Naive thymus-derived CD4-positive, alpha-beta T cell (primary cell): ENCODE measurements at regions of chr9 and their contacts with region 1.

Region 1: DNA sequence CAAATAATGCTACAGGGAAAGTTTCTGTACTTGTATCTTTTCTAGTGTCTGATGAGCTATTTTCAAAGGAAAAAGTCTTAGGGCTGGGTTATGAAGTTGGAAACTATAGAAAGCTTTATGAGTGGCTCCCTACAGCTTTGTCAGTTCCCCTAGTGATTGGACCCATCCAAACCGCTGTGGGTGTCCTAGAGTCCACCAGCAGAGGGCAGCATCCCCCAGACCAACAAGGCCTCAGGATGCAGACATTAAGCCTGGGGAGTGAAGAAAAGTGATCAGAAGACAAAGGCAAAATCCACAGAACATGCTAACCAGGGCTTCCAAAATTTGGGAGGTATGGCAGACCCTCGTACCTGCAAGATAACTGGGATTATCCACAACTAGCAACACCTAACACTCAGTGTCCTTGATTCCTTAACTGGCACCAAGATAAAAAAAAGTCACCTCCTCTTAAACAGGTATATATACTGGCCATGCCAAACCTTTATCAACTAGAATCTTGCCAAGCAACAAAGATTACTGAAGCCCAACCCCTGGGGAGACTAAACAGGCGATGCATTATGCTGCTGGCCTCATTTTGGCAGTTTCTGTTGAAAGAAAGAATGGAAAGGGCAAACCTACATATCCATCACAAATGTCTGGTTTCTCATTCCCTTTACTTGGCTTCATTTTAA is 110.4 kb upstream of the NR5A1 start:
- DNase-seq: peak; percentile 36 to 76 (median 66)
- ATAC-seq: peak; percentile 90
- H3K4me3 ChIP-seq: no peak overlapping the region
- H3K4me3 Mint-ChIP-seq: no peak overlapping the region
- H3K27ac ChIP-seq: no peak overlapping the region
- H3K27ac Mint-ChIP-seq: no peak overlapping the region
- H3K4me1 ChIP-seq: no peaks in the 10 kb centered on the region
- H3K4me1 Mint-ChIP-seq: peaks cover 0 to 12% (median 0%) of the 10 kb centered on the region in 7 donors
- H3K27me3 ChIP-seq: no peaks in the 10 kb centered on the region
- H3K27me3 Mint-ChIP-seq: peaks cover 5 to 22% (median 13%) of the 10 kb centered on the region in 5 donors

Region 2: GRCh38 chr9:124353811-124354274 is 263.8 kb before region 1 on chr9:
- CTCF ChIA-PET with region 1: no interaction called
- POLR2A ChIA-PET with region 1: no interaction called
- intact Hi-C with region 1: no loop called
- DNase-seq: no peak
- ATAC-seq: no peak
- H3K4me3 ChIP-seq: no peak overlapping the region
- H3K4me3 Mint-ChIP-seq: no peak overlapping the region
- H3K27ac ChIP-seq: no peak overlapping the region
- H3K27ac Mint-ChIP-seq: peak overlapping the region in 2 of 9 donors; percentile 10 to 32
- H3K4me1 ChIP-seq: peaks cover 0 to 10% of the 10 kb centered on the region in 2 donors
- H3K4me1 Mint-ChIP-seq: peaks cover 9 to 20% (median 16%) of the 10 kb centered on the region in 7 donors
- H3K27me3 ChIP-seq: no peaks in the 10 kb centered on the region
- H3K27me3 Mint-ChIP-seq: no peaks in the 10 kb centered on the region

Region 3: GRCh38 chr9:124551472-124552272 is 65.9 kb before region 1 on chr9:
- CTCF ChIA-PET with region 1: no interaction called
- POLR2A ChIA-PET with region 1: no interaction called
- intact Hi-C with region 1: loop called in 1 of 2 experiments (anchors 1 kb)
- DNase-seq: peak in 7 of 9 donors; percentile 18 to 38 (median 30)
- ATAC-seq: peak; percentile 45
- H3K4me3 ChIP-seq: no peak overlapping the region
- H3K4me3 Mint-ChIP-seq: no peak overlapping the region
- H3K27ac ChIP-seq: no peak overlapping the region
- H3K27ac Mint-ChIP-seq: no peak overlapping the region
- H3K4me1 ChIP-seq: peaks cover 0 to 10% of the 10 kb centered on the region in 2 donors
- H3K4me1 Mint-ChIP-seq: peaks cover 0 to 15% (median 9%) of the 10 kb centered on the region in 7 donors
- H3K27me3 ChIP-seq: no peaks in the 10 kb centered on the region
- H3K27me3 Mint-ChIP-seq: peaks cover 0 to 16% (median 0%) of the 10 kb centered on the region in 5 donors

Region 4: DNA sequence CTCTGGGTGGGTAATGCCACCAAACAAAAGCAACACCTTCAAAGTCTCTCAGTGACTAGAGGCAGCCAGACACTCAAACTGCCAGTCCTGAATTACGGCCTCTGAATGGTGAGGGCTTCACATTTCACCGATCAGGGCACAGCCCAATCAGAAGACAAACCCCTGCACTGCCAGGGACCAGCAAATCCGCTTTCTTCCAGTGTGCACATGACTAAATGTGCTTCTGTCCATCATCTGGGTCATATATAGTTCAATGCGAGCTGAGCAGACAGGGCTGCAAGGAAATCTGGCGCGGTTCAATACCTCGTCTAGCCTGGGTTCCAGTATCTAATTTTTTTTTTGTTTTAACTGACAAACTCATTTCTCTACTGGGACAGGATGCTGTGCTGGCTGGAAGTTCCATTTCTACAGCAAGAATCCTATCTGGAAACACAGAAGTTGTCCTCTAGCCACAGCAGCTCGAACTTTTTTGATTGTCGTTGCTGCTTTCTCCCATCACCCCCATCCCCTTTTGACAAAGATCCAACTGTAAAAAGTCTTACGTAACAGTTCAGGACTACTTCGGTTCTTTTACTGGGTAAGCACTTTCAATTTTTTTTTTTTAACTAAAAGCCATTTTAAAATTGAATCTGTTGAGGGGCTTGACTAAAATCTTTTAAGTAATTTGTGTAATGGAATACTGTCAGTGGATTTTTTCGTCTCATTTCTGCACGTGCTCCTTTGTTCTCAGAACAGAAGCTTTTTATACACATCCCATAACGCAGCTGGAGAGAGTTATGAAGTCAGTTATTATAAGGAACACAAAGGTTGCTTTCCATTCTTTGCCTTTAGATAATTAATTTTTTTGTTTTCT is 40.8 kb after region 1 on chr9:
- CTCF ChIA-PET with region 1: interaction called, 9 read pairs
- POLR2A ChIA-PET with region 1: no interaction called
- intact Hi-C with region 1: loop called in 1 of 2 experiments (anchors 2 kb)
- DNase-seq: peak in 7 of 9 donors; percentile 21 to 44 (median 34)
- ATAC-seq: peak; percentile 84
- H3K4me3 ChIP-seq: peak overlapping the region; percentile 71
- H3K4me3 Mint-ChIP-seq: peak overlapping the region; percentile 87 to 98 (median 94)
- H3K27ac ChIP-seq: peak overlapping the region; percentile 61
- H3K27ac Mint-ChIP-seq: peak overlapping the region in 8 of 9 donors; percentile 85 to 98 (median 89)
- H3K4me1 ChIP-seq: peaks cover 0 to 6% of the 10 kb centered on the region in 2 donors
- H3K4me1 Mint-ChIP-seq: peaks cover 23 to 61% (median 35%) of the 10 kb centered on the region in 7 donors
- H3K27me3 ChIP-seq: no peaks in the 10 kb centered on the region
- H3K27me3 Mint-ChIP-seq: peaks cover 0 to 18% (median 0%) of the 10 kb centered on the region in 5 donors

Region 5: GRCh38 chr9:124754289-124754688 is 136.7 kb after region 1 on chr9:
- CTCF ChIA-PET with region 1: no interaction called
- POLR2A ChIA-PET with region 1: no interaction called
- intact Hi-C with region 1: loop called in 1 of 2 experiments (anchors 1 kb)
- DNase-seq: no peak
- ATAC-seq: no peak
- H3K4me3 ChIP-seq: no peak overlapping the region
- H3K4me3 Mint-ChIP-seq: no peak overlapping the region
- H3K27ac ChIP-seq: no peak overlapping the region
- H3K27ac Mint-ChIP-seq: no peak overlapping the region
- H3K4me1 ChIP-seq: no peaks in the 10 kb centered on the region
- H3K4me1 Mint-ChIP-seq: no peaks in the 10 kb centered on the region
- H3K27me3 ChIP-seq: peaks cover 0 to 8% of the 10 kb centered on the region in 2 donors
- H3K27me3 Mint-ChIP-seq: peaks cover 57 to 72% (median 68%) of the 10 kb centered on the region in 5 donors

Region 6: DNA sequence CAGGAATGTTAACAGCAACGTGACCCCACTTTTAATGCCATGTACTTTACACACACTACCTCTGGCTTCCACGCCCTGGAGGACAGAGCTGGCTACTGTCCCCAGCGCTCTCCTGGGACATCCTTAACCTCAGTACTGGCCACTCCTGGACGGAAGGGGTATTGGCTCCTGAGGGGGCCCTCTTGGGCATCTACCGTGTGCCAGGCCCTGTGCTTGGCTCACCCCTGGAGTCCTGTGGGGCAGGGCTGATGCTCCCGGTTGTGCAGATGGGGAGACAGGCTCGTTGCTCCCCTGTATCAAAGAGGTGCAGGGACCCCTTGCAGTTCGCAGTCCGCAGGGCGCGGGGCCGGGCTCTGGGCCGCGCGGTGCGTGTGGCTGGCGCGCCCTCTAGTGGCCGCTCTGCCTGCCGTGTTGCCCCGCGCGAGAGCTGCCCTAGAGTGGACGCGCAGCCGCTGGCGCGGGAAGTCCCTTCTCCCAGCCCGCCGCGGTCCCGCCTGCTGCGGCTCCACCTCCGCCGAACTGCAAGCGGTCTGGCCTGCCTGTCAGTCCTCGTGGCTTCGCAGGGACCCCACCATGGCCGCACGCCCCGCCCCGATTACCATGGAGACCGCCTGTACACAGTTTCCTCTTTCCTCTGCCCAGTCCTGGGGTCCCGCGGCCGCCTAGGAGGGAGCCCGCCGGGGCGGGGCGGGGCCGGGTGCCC is 235.4 kb after region 1 on chr9 and contains the start of gene WDR38:
- CTCF ChIA-PET with region 1: interaction called, 3 read pairs
- POLR2A ChIA-PET with region 1: no interaction called
- intact Hi-C with region 1: loop called (anchors 2 to 10 kb)
- DNase-seq: peak; percentile 55 to 86 (median 76)
- ATAC-seq: peak; percentile 95
- H3K4me3 ChIP-seq: peak within 1 kb of the TSS; percentile 50
- H3K4me3 Mint-ChIP-seq: peak within 1 kb of the TSS in 9 of 10 donors; percentile 64 to 79 (median 68)
- H3K27ac ChIP-seq: peak within 1 kb of the TSS; percentile 46
- H3K27ac Mint-ChIP-seq: peak within 1 kb of the TSS in 3 of 9 donors; percentile 9 to 23 (median 19)
- H3K4me1 ChIP-seq: peaks cover 8% of the 10 kb centered on the region in 2 donors
- H3K4me1 Mint-ChIP-seq: peaks cover 4 to 14% (median 6%) of the 10 kb centered on the region in 7 donors
- H3K27me3 ChIP-seq: no peaks in the 10 kb centered on the region
- H3K27me3 Mint-ChIP-seq: peaks cover 5 to 16% (median 9%) of the 10 kb centered on the region in 5 donors
- total RNA-seq, gene WDR38: not detected

Region 7: DNA sequence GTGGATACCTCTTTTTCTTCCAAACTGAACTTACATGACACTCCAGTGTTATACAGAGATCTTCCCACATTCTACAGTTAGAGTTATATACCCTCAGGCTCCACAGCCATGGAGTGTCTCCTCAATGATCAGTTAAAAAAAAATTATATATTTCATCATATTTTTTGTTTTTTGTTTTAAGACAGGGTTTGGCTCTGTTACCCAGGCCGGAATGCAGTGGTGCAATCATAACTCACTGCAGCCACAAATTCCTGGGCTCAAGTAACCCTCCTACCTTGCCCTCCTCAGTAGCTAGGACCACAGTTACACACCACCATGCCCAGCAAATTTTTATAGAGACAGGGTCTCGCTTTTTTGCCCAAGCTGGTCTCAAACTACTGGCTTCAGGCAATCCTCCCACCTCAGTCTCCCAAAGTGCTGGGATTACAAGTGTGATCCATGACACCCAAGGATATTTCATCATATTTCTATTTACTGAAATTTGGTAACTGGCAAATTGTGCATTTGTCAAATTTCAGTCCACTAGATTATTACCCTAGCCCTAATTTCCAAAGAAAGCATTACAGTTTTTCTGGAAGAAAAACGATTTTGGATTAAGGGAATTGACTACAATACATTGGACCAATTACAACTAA is 543.8 kb after region 1 on chr9:
- CTCF ChIA-PET with region 1: no interaction called
- POLR2A ChIA-PET with region 1: no interaction called
- intact Hi-C with region 1: no loop called
- DNase-seq: no peak
- ATAC-seq: no peak
- H3K4me3 ChIP-seq: no peak overlapping the region
- H3K4me3 Mint-ChIP-seq: no peak overlapping the region
- H3K27ac ChIP-seq: no peak overlapping the region
- H3K27ac Mint-ChIP-seq: peak overlapping the region in 5 of 9 donors; percentile 47 to 85 (median 77)
- H3K4me1 ChIP-seq: no peaks in the 10 kb centered on the region
- H3K4me1 Mint-ChIP-seq: peaks cover 0 to 19% (median 11%) of the 10 kb centered on the region in 7 donors
- H3K27me3 ChIP-seq: no peaks in the 10 kb centered on the region
- H3K27me3 Mint-ChIP-seq: no peaks in the 10 kb centered on the region

Region 8: GRCh38 chr9:125374443-125375309 is 757.1 kb after region 1 on chr9:
- CTCF ChIA-PET with region 1: no interaction called
- POLR2A ChIA-PET with region 1: no interaction called
- intact Hi-C with region 1: loop called in 1 of 2 experiments (anchors 10 kb)
- DNase-seq: peak; percentile 37 to 74 (median 64)
- ATAC-seq: peak; percentile 86
- H3K4me3 ChIP-seq: peak overlapping the region; percentile 46
- H3K4me3 Mint-ChIP-seq: peak overlapping the region in 8 of 10 donors; percentile 36 to 76 (median 64)
- H3K27ac ChIP-seq: no peak overlapping the region
- H3K27ac Mint-ChIP-seq: peak overlapping the region in 1 of 9 donors; percentile 55
- H3K4me1 ChIP-seq: peaks cover 0 to 9% of the 10 kb centered on the region in 2 donors
- H3K4me1 Mint-ChIP-seq: peaks cover 5 to 10% (median 6%) of the 10 kb centered on the region in 7 donors
- H3K27me3 ChIP-seq: no peaks in the 10 kb centered on the region
- H3K27me3 Mint-ChIP-seq: peaks cover 0 to 8% (median 2%) of the 10 kb centered on the region in 5 donors